MCF 10A (cell line): ENCODE measurements at regions of chr11 and their contacts with region 1.

Region 1: DNA sequence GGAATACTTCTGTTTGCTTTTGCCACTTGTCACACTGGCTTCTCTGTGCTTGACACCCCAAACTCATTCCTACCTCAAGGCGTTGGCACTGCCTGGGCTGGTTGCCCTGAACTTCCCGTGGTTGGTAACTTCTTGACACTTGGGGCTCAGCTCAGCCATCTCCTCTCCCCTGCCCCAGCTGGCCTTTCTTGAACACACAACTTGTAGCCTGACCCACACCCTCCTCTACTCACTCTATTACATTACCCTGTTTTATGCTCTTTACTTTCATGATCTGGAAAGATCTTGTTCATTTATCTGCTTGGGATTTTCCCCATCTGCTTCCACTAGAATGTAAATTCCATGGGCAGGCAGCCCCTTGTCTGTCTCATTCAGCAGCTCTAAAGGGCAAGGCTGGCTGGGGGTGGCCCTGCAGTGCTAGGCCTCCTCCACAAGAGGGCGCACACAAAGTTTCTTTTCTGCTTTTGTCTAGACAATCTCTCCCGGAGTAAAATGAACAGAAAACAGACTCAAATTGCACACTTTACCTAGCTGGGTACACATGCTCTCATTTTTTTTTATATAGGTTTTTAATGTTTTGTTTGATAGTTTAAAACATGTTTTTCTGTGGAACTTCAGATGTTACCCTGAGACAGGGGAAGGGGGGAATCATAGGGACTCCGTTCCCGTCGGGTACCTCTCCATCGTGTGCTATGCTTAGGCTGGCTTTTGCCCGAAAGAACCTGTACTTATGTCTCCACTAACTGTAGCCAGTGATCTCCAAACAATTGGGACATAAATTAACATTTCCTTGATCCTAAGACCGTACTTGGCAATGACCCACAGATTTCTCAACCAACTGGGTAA is 16.4 kb upstream of the MRGPRX2 start:
- DNase-seq: peak; percentile 69
- H3K4me3 Mint-ChIP-seq: no peak overlapping the region
- H3K27ac Mint-ChIP-seq: no peak overlapping the region
- H3K4me1 Mint-ChIP-seq: peaks cover 21% of the 10 kb centered on the region
- H3K27me3 Mint-ChIP-seq: peaks cover 21% of the 10 kb centered on the region
- CTCF ChIP-seq: peak; percentile 94

Region 2: GRCh38 chr11:19055016-19055415 is 22.0 kb before region 1 on chr11:
- CTCF ChIA-PET with region 1: interaction called, 29 read pairs
- POLR2A ChIA-PET with region 1: no interaction called
- intact Hi-C with region 1: no loop called
- DNase-seq: no peak
- H3K4me3 Mint-ChIP-seq: no peak overlapping the region
- H3K27ac Mint-ChIP-seq: no peak overlapping the region
- H3K4me1 Mint-ChIP-seq: no peaks in the 10 kb centered on the region
- H3K27me3 Mint-ChIP-seq: peaks cover 92% of the 10 kb centered on the region
- CTCF ChIP-seq: no peak

Region 3: GRCh38 chr11:19110280-19110679 is 33.3 kb after region 1 on chr11:
- CTCF ChIA-PET with region 1: interaction called, 27 read pairs
- POLR2A ChIA-PET with region 1: no interaction called
- intact Hi-C with region 1: no loop called
- DNase-seq: no peak
- H3K4me3 Mint-ChIP-seq: no peak overlapping the region
- H3K27ac Mint-ChIP-seq: no peak overlapping the region
- H3K4me1 Mint-ChIP-seq: no peaks in the 10 kb centered on the region
- H3K27me3 Mint-ChIP-seq: peaks cover 21% of the 10 kb centered on the region
- CTCF ChIP-seq: no peak

Region 4: DNA sequence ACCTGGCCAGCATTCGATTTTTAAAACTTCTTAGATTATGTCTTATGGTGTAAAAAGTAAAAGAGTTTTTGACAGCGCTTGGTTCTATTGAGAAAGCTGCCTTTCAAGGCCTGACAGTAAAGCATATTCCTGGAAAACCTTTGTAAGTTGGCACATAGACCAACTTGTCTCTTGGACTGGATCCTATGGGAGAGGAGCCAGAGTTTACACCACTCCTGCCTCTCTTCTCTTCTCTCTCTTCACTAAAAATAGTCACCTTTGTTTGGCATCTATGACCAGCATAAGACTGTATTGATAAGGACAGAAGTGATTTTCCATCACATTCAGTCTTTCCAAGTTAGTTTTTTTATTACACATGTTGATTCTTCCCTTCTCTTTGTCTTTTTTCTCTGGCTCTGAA is 91.1 kb after region 1 on chr11:
- CTCF ChIA-PET with region 1: interaction called, 16 read pairs
- POLR2A ChIA-PET with region 1: no interaction called
- intact Hi-C with region 1: no loop called
- DNase-seq: no peak
- H3K4me3 Mint-ChIP-seq: no peak overlapping the region
- H3K27ac Mint-ChIP-seq: no peak overlapping the region
- H3K4me1 Mint-ChIP-seq: no peaks in the 10 kb centered on the region
- H3K27me3 Mint-ChIP-seq: no peaks in the 10 kb centered on the region
- CTCF ChIP-seq: no peak

Region 5: GRCh38 chr11:19259487-19260345 is 182.7 kb after region 1 on chr11:
- CTCF ChIA-PET with region 1: interaction called, 41 read pairs
- POLR2A ChIA-PET with region 1: no interaction called
- intact Hi-C with region 1: no loop called
- DNase-seq: peak; percentile 65
- H3K4me3 Mint-ChIP-seq: peak overlapping the region; percentile 39
- H3K27ac Mint-ChIP-seq: no peak overlapping the region
- H3K4me1 Mint-ChIP-seq: no peaks in the 10 kb centered on the region
- H3K27me3 Mint-ChIP-seq: no peaks in the 10 kb centered on the region
- CTCF ChIP-seq: peak; percentile 94